ENCODE measurements at regions of chr10 and their contacts with region 1.

Region 1: GRCh38 chr10:30241422-30242110 is 107.5 kb downstream of the MTPAP start:
- DNase-seq: no peak
- H3K4me3 Mint-ChIP-seq: no peak overlapping the region
- H3K27ac Mint-ChIP-seq: no peak overlapping the region
- H3K4me1 Mint-ChIP-seq: no peaks in the 10 kb centered on the region
- H3K27me3 Mint-ChIP-seq: no peaks in the 10 kb centered on the region

Region 2: GRCh38 chr10:30231071-30231652 is 10.4 kb before region 1 on chr10:
- CTCF ChIA-PET with region 1: interaction called, 10 read pairs
- intact Hi-C with region 1: no loop called
- DNase-seq: peak; percentile 33
- H3K4me3 Mint-ChIP-seq: no peak overlapping the region
- H3K27ac Mint-ChIP-seq: peak overlapping the region; percentile 32
- H3K4me1 Mint-ChIP-seq: peaks cover 13% of the 10 kb centered on the region
- H3K27me3 Mint-ChIP-seq: peaks cover 5% of the 10 kb centered on the region

Measured in activated naive CD4-positive, alpha-beta T cell treated with anti-CD3 and anti-CD28 coated beads for 36 hours (primary cell).